GM12878 (cell line): ENCODE measurements at regions of chr10 and their contacts with region 1.

Region 1: GRCh38 chr10:44030143-44030542 is 354.8 kb downstream of the CXCL12 start:
- DNase-seq: no peak
- ATAC-seq: peak; percentile 90
- H3K4me3 ChIP-seq: no peak overlapping the region
- H3K27ac ChIP-seq: no peak overlapping the region
- H3K4me1 ChIP-seq: no peaks in the 10 kb centered on the region
- H3K27me3 ChIP-seq: no peaks in the 10 kb centered on the region
- CTCF ChIP-seq: peak; percentile 65 to 78 (median 71); a peak in 5 of 6 replicates
- EP300 ChIP-seq: no peak
- POLR2A ChIP-seq: no peak
- RAD21 ChIP-seq: peak; percentile 98

Region 2: GRCh38 chr10:43479275-43479674 is 550.9 kb before region 1 on chr10:
- CTCF ChIA-PET with region 1: no interaction called
- POLR2A ChIA-PET with region 1: no interaction called
- RAD21 ChIA-PET with region 1: no interaction called
- SMC1A ChIA-PET with region 1: no interaction called
- in situ Hi-C with region 1: no loop called
- intact Hi-C with region 1: no loop called
- DNase-seq: no peak
- ATAC-seq: no peak
- H3K4me3 ChIP-seq: no peak overlapping the region
- H3K27ac ChIP-seq: no peak overlapping the region
- H3K4me1 ChIP-seq: no peaks in the 10 kb centered on the region
- H3K27me3 ChIP-seq: no peaks in the 10 kb centered on the region
- CTCF ChIP-seq: no peak
- EP300 ChIP-seq: no peak
- POLR2A ChIP-seq: no peak
- RAD21 ChIP-seq: no peak

Region 3: DNA sequence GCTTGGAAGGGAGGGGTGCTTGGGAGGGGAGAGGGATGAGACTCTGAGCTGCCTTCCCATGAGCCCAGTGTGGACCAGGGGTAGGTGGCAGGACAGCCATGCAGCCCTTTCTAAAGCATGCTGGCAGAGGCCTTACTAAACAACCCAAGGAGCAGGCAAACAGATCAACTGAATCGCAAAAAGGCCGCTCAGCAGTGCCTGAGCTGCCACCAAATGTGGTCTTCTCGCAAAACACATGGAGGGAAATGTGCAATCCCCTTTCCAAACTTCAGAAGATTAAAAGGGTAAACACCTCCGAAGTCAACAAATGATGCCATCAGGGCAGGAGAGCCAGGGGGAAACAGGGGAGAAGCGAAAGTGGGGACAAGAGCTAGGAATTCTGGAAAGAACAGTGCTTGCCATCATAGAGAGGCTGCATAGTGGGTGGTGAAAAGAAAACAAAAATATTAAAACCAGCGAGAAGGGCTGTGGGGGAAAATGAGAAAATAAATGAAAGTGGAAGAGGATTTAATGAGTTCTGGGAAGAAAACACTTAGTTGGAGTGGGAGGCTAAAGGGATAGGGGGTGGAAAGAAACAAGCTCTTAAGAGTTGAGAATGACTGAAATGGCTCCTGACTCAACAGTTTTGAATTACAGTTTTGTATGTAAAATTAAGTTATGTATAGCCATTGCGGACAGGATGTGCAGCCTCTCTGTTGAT is 319.2 kb before region 1 on chr10:
- CTCF ChIA-PET with region 1: no interaction called
- POLR2A ChIA-PET with region 1: no interaction called
- RAD21 ChIA-PET with region 1: no interaction called
- SMC1A ChIA-PET with region 1: no interaction called
- in situ Hi-C with region 1: no loop called
- intact Hi-C with region 1: no loop called
- DNase-seq: no peak
- ATAC-seq: no peak
- H3K4me3 ChIP-seq: no peak overlapping the region
- H3K27ac ChIP-seq: no peak overlapping the region
- H3K4me1 ChIP-seq: no peaks in the 10 kb centered on the region
- H3K27me3 ChIP-seq: peaks cover 0 to 2% of the 10 kb centered on the region in 2 experiments; a peak in 2 of 4 replicates
- CTCF ChIP-seq: no peak
- EP300 ChIP-seq: no peak
- POLR2A ChIP-seq: no peak
- RAD21 ChIP-seq: no peak

Region 4: DNA sequence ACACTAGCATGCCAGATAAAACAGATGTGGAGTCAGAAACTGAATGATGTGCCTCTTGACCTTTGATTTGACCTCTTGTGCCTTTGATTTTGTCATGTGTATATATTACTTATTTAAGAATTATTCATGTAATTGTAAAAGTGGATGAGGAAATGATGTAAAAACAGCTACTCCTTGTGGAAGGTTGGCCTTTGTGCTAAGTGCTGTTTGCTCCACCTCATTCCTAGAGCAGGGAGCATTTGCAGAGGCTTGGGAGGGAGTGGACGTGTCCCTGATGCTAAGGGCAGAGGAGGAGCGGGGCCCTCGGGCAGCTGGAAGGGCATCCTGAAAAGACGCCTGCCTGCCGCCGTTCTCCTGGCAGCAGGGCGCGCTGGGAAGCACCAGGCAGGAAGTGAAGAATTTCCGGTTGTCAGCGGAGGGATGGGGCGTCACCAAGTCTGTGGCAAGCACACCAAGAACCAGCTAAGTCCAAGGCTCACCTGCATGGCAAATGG is 183.9 kb before region 1 on chr10:
- CTCF ChIA-PET with region 1: no interaction called
- POLR2A ChIA-PET with region 1: no interaction called
- RAD21 ChIA-PET with region 1: no interaction called
- SMC1A ChIA-PET with region 1: no interaction called
- in situ Hi-C with region 1: no loop called
- intact Hi-C with region 1: no loop called
- DNase-seq: peak; percentile 4
- ATAC-seq: no peak
- H3K4me3 ChIP-seq: no peak overlapping the region
- H3K27ac ChIP-seq: no peak overlapping the region
- H3K4me1 ChIP-seq: no peaks in the 10 kb centered on the region; the same call in 1 of the 2 replicates
- H3K27me3 ChIP-seq: no peaks in the 10 kb centered on the region
- CTCF ChIP-seq: no peak
- EP300 ChIP-seq: no peak
- POLR2A ChIP-seq: no peak
- RAD21 ChIP-seq: no peak

Region 5: GRCh38 chr10:43885823-43886222 is 144.3 kb before region 1 on chr10:
- CTCF ChIA-PET with region 1: interaction called, 8 read pairs
- POLR2A ChIA-PET with region 1: no interaction called
- RAD21 ChIA-PET with region 1: interaction called, 17 read pairs
- SMC1A ChIA-PET with region 1: interaction called, 12 read pairs
- in situ Hi-C with region 1: no loop called
- intact Hi-C with region 1: no loop called
- DNase-seq: no peak
- ATAC-seq: peak; percentile 46; the same call in 1 of the 3 replicates
- H3K4me3 ChIP-seq: no peak overlapping the region
- H3K27ac ChIP-seq: no peak overlapping the region
- H3K4me1 ChIP-seq: no peaks in the 10 kb centered on the region
- H3K27me3 ChIP-seq: peaks cover 0 to 4% of the 10 kb centered on the region in 2 experiments; a peak in 3 of 4 replicates
- CTCF ChIP-seq: peak; percentile 22 to 34 (median 28); a peak in 3 of 6 replicates
- EP300 ChIP-seq: no peak
- POLR2A ChIP-seq: no peak
- RAD21 ChIP-seq: peak; percentile 59

Region 6: GRCh38 chr10:43905512-43906236 is 124.5 kb before region 1 on chr10:
- CTCF ChIA-PET with region 1: interaction called, 10 read pairs
- POLR2A ChIA-PET with region 1: no interaction called
- RAD21 ChIA-PET with region 1: interaction called, 19 read pairs
- SMC1A ChIA-PET with region 1: interaction called, 10 read pairs
- in situ Hi-C with region 1: no loop called
- intact Hi-C with region 1: no loop called
- DNase-seq: no peak
- ATAC-seq: no peak
- H3K4me3 ChIP-seq: no peak overlapping the region
- H3K27ac ChIP-seq: no peak overlapping the region
- H3K4me1 ChIP-seq: no peaks in the 10 kb centered on the region
- H3K27me3 ChIP-seq: peaks cover 2 to 3% of the 10 kb centered on the region in 2 experiments; a peak in 3 of 4 replicates
- CTCF ChIP-seq: no peak
- EP300 ChIP-seq: no peak
- POLR2A ChIP-seq: no peak
- RAD21 ChIP-seq: no peak

Region 7: GRCh38 chr10:44064317-44064716 is 34.2 kb after region 1 on chr10:
- CTCF ChIA-PET with region 1: no interaction called
- POLR2A ChIA-PET with region 1: no interaction called
- RAD21 ChIA-PET with region 1: no interaction called
- SMC1A ChIA-PET with region 1: no interaction called
- in situ Hi-C with region 1: no loop called
- intact Hi-C with region 1: no loop called
- DNase-seq: no peak
- ATAC-seq: no peak
- H3K4me3 ChIP-seq: no peak overlapping the region
- H3K27ac ChIP-seq: no peak overlapping the region
- H3K4me1 ChIP-seq: no peaks in the 10 kb centered on the region
- H3K27me3 ChIP-seq: no peaks in the 10 kb centered on the region
- CTCF ChIP-seq: no peak
- EP300 ChIP-seq: no peak
- POLR2A ChIP-seq: no peak
- RAD21 ChIP-seq: no peak